Endothelial cell of umbilical vein (primary cell): ENCODE measurements at regions of chr1 and their contacts with region 1.

Region 1: GRCh38 chr1:12166834-12167492 is at the start of gene TNFRSF1B:
- DNase-seq: peak; percentile 71
- H3K4me3 ChIP-seq: peak within 1 kb of the TSS; percentile 74 to 84 (median 77)
- H3K27ac ChIP-seq: peak within 1 kb of the TSS; percentile 25
- H3K4me1 ChIP-seq: peaks cover 25% of the 10 kb centered on the region
- H3K27me3 ChIP-seq: no peaks in the 10 kb centered on the region
- CTCF ChIP-seq: no peak
- POLR2A ChIP-seq: peak; percentile 85
- total RNA-seq, gene TNFRSF1B: 65.9 and 66.0 TPM in 2 replicates

Region 2: GRCh38 chr1:12132092-12132491 is 34.9 kb before region 1 on chr1:
- CTCF ChIA-PET with region 1: interaction called, 3 read pairs
- POLR2A ChIA-PET with region 1: interaction called, 5 read pairs
- dilution Hi-C with region 1: no loop called
- intact Hi-C with region 1: loop called (anchors 1 kb)
- DNase-seq: no peak
- H3K4me3 ChIP-seq: no peak overlapping the region
- H3K27ac ChIP-seq: no peak overlapping the region
- H3K4me1 ChIP-seq: peaks cover 8% of the 10 kb centered on the region
- H3K27me3 ChIP-seq: no peaks in the 10 kb centered on the region
- CTCF ChIP-seq: no peak
- POLR2A ChIP-seq: no peak

Region 3: DNA sequence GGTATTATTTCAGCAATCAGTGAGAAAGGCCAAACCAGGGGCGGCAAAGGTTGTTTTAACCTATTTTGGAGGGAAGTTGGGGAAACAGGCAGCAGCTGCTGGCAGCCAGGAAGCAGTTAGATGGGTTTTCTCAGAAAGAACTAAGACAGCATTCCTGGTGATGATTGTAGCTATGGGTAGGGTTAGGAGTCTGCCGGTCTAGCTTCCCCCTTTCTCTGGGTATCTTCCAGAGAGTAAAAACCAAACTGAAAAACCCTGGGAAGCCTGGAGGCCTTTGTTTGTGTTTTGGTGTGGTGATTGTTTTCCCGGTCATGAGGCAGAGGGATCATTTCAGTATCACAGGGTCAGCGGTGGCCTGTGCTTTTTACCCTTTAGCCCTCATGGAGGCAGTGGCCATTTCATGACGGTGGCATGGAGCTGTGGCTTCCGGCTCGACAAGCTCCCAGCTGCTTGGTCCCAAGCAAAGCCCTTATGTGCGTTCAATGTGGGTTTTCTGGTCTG is 19.7 kb before region 1 on chr1:
- CTCF ChIA-PET with region 1: interaction called, 12 read pairs
- POLR2A ChIA-PET with region 1: no interaction called
- dilution Hi-C with region 1: no loop called
- intact Hi-C with region 1: loop called (anchors 1 kb)
- DNase-seq: peak; percentile 93
- H3K4me3 ChIP-seq: no peak overlapping the region
- H3K27ac ChIP-seq: peak overlapping the region; percentile 75
- H3K4me1 ChIP-seq: peaks cover 29% of the 10 kb centered on the region
- H3K27me3 ChIP-seq: no peaks in the 10 kb centered on the region
- CTCF ChIP-seq: no peak
- POLR2A ChIP-seq: no peak

Region 4: DNA sequence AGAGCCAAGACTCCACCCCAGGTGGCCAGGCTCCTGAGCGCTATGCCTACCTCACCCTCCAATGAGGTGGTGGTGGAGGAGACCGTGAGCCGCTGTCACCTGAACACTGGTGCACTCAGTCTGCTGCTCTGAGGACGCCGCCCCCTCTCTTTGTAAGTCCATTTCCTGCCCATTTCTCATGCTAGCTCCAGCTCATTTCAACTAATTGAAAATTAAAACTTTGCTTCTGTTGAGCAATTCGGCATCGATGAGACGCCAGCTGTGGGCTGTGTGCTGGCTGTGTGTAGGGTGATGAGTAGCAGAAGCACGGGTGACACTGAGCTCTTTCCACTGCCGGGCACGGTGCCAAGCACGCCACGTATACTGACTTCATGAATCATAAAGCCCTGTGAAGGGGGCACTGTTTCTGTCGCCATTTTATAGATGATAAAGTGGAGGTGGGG is 11.1 kb after region 1 on chr1:
- CTCF ChIA-PET with region 1: interaction called, 12 read pairs
- POLR2A ChIA-PET with region 1: interaction called, 3 read pairs
- dilution Hi-C with region 1: no loop called
- intact Hi-C with region 1: loop called (anchors 1 kb)
- DNase-seq: peak; percentile 85
- H3K4me3 ChIP-seq: no peak overlapping the region
- H3K27ac ChIP-seq: peak overlapping the region; percentile 95
- H3K4me1 ChIP-seq: peaks cover 43% of the 10 kb centered on the region
- H3K27me3 ChIP-seq: no peaks in the 10 kb centered on the region
- CTCF ChIP-seq: no peak
- POLR2A ChIP-seq: no peak

Region 5: DNA sequence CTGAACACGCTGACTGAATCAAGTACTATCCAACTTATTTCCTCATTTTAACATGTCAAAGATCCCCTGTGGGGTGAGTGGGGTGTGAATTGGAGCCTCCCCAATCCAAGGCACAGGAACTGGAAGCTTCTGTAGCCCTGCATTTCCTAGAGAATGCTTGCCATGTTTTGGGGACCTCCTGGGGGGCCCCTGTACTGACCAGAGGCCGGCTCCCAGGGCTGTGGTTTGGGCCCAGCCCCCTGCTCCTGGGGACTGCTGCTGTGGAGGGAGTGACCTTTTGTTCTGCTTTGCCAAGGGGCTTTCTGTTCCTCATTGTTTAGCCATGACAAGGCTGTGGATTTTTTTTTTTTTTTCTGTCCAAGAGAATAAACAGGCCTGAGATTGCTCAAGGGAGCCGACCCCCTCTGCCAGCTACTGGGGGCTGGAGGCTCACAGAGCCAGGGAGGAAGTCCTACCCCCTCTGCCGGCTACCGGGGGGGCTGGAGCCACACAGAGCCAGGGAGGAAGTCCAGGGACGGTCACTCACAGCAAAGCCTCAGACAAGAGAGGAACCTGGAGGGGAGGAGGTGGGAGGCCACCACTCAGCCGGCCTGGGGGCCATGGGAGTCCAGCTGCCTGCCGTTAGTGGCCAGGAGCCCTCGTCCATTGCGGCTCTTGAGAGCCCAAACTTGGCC is 17.2 kb after region 1 on chr1:
- CTCF ChIA-PET with region 1: interaction called, 12 read pairs
- POLR2A ChIA-PET with region 1: no interaction called
- dilution Hi-C with region 1: no loop called
- intact Hi-C with region 1: loop called (anchors 1 kb)
- DNase-seq: peak; percentile 93
- H3K4me3 ChIP-seq: no peak overlapping the region
- H3K27ac ChIP-seq: peak overlapping the region; percentile 90
- H3K4me1 ChIP-seq: peaks cover 31% of the 10 kb centered on the region
- H3K27me3 ChIP-seq: no peaks in the 10 kb centered on the region
- CTCF ChIP-seq: peak; percentile 42 to 55
- POLR2A ChIP-seq: no peak

Region 6: DNA sequence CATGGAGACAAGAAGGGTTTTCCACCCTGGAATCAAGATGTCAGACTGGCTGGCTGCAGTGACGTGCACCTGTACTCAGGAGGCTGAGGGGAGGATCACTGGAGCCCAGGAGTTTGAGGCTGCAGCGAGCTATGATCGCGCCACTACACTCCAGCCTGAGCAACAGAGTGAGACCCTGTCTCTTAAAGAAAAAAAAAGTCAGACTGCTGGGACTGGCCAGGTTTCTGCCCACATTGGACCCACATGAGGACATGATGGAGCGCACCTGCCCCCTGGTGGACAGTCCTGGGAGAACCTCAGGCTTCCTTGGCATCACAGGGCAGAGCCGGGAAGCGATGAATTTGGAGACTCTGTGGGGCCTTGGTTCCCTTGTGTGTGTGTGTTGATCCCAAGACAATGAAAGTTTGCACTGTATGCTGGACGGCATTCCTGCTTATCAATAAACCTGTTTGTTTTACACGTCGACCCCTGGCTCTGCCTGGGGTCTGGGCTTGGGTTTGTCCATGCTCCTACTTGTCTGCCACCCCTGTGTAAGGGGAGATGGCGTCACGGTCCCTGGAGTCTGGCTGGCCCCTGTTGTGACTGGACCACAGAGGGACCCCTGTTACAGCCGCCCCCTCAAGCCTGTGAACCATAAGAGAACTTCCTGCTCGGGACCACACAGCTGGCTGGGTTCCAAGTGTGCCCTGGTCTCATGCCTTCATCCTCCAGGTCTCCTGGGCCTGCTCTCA is 42.0 kb after region 1 on chr1:
- CTCF ChIA-PET with region 1: interaction called, 4 read pairs
- POLR2A ChIA-PET with region 1: no interaction called
- dilution Hi-C with region 1: no loop called
- intact Hi-C with region 1: loop called (anchors 1 kb)
- DNase-seq: peak; percentile 84
- H3K4me3 ChIP-seq: no peak overlapping the region
- H3K27ac ChIP-seq: no peak overlapping the region
- H3K4me1 ChIP-seq: no peaks in the 10 kb centered on the region
- H3K27me3 ChIP-seq: no peaks in the 10 kb centered on the region
- CTCF ChIP-seq: peak; percentile 87 to 92
- POLR2A ChIP-seq: no peak

Region 7: GRCh38 chr1:12229835-12230548 is 63.0 kb after region 1 on chr1 and contains the start of gene VPS13D:
- CTCF ChIA-PET with region 1: no interaction called
- POLR2A ChIA-PET with region 1: no interaction called
- dilution Hi-C with region 1: no loop called
- intact Hi-C with region 1: no loop called
- DNase-seq: peak; percentile 59
- H3K4me3 ChIP-seq: peak within 1 kb of the TSS; percentile 59 to 75 (median 73)
- H3K27ac ChIP-seq: peak within 1 kb of the TSS; percentile 20
- H3K4me1 ChIP-seq: peaks cover 6% of the 10 kb centered on the region
- H3K27me3 ChIP-seq: no peaks in the 10 kb centered on the region
- CTCF ChIP-seq: peak; percentile 91 to 99
- POLR2A ChIP-seq: peak; percentile 68
- total RNA-seq, gene VPS13D: 41.7 and 48.5 TPM in 2 replicates